ENCODE measurements at regions of chr15 and their contacts with region 1.

Region 1: DNA sequence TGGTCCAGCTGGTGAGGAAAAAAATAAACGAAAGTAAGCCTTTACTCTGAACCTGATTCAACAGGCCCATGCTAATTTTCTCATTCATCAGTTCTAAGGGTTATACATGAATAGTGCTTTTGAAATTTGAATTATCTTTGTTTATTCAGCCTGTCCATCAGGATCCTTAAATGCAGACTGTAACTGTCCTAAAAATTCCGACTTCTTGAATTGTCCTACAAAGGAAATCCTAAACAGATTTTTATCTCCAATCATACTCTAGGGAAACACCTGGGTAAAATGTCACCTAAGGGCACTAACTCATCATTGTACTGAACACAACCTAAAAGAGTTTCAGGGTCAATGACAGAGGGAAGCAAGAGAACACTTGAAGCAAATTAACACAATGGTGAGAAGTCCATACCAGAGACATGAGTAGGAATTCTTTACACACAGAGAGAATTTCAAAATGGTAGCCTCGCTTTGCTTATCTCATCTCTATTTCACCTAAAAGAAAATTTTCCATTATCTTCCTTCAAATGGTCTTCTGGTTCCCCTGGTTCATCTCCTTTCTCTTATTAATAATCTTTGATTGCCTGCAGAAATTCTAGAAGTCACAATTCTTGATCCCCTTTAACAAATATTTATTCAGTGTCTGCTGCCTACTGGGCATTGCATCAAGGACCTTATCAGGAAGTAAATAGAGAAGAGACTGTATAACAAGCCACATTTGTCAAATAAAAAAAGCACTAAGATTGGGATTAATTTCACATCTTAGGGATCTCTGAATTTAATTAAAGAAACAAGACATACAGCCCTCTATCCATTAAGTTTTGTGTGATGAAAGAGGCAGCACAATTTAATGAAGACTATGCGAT is 182.7 kb downstream of the MEIS2 start:
- DNase-seq: no peak
- ATAC-seq: no peak
- H3K4me3 ChIP-seq: no peak overlapping the region
- H3K27ac ChIP-seq: no peak overlapping the region
- H3K4me1 ChIP-seq: peaks cover 0 to 42% (median 13%) of the 10 kb centered on the region in 12 donors
- H3K27me3 ChIP-seq: no peaks in the 10 kb centered on the region
- CTCF ChIP-seq: no peak
- POLR2A ChIP-seq: no peak

Region 2: DNA sequence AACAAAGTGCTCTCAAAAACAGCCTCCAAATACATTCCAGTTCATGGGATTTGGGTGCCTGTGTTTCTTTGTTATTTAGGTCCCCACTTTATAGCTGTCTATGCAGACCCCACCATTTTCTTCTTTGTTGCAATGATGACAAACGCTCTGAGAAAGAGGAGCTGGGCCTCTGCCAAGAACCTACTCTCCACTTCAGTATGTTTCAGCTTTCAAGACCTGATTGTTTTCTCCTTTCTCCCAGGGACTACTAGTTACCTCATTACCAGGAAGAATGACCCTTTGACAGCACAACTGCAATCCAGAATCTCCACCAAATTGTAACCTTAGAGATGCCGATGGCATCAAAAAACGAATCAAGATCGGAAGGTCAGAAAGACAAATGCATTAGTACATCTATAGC is 54.1 kb before region 1 on chr15:
- intact Hi-C with region 1: no loop called
- DNase-seq: no peak
- ATAC-seq: no peak
- H3K4me3 ChIP-seq: no peak overlapping the region
- H3K27ac ChIP-seq: no peak overlapping the region
- H3K4me1 ChIP-seq: no peaks in the 10 kb centered on the region
- H3K27me3 ChIP-seq: no peaks in the 10 kb centered on the region
- CTCF ChIP-seq: no peak
- POLR2A ChIP-seq: no peak

Region 3: DNA sequence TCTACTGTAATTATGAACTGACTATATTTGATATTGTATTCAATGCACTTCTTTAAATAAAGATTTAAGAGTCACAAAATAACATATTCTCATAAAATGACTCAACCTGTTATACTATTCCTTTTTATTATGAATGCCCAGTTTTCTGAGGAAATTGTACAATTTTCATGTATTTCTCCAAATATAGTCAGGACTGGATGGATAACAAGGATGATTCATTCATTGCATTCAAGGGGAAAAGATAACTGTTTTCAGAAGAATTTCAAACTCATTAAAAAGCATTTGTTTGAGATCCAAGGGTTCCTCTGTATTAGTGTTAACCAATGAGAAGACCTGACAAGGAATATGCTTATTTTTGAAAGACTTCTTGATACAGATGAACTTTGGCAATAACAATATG is 19.0 kb after region 1 on chr15:
- intact Hi-C with region 1: no loop called
- DNase-seq: no peak
- ATAC-seq: no peak
- H3K4me3 ChIP-seq: no peak overlapping the region
- H3K27ac ChIP-seq: no peak overlapping the region
- H3K4me1 ChIP-seq: peaks cover 0 to 38% (median 0%) of the 10 kb centered on the region in 12 donors
- H3K27me3 ChIP-seq: no peaks in the 10 kb centered on the region
- CTCF ChIP-seq: no peak
- POLR2A ChIP-seq: no peak

Region 4: GRCh38 chr15:36982430-36982829 is 64.8 kb after region 1 on chr15:
- intact Hi-C with region 1: loop called in 2 of 10 experiments (anchors 2 to 10 kb)
- DNase-seq: no peak
- ATAC-seq: no peak
- H3K4me3 ChIP-seq: no peak overlapping the region
- H3K27ac ChIP-seq: peak overlapping the region in 4 of 12 donors; percentile 27 to 43 (median 34)
- H3K4me1 ChIP-seq: peaks cover 0 to 24% (median 3%) of the 10 kb centered on the region in 12 donors
- H3K27me3 ChIP-seq: no peaks in the 10 kb centered on the region
- CTCF ChIP-seq: no peak
- POLR2A ChIP-seq: no peak

Measured in heart left ventricle (tissue), 16 donors.